ENCODE measurements at regions of chr20 and their contacts with region 1.

Region 1: GRCh38 chr20:50409495-50409894 is 100.7 kb upstream of the PTPN1 start:
- H3K4me3 Mint-ChIP-seq: no peak overlapping the region
- H3K27ac Mint-ChIP-seq: peak overlapping the region; percentile 37
- H3K4me1 Mint-ChIP-seq: peaks cover 38% of the 10 kb centered on the region
- H3K27me3 Mint-ChIP-seq: peaks cover 11% of the 10 kb centered on the region

Region 2: DNA sequence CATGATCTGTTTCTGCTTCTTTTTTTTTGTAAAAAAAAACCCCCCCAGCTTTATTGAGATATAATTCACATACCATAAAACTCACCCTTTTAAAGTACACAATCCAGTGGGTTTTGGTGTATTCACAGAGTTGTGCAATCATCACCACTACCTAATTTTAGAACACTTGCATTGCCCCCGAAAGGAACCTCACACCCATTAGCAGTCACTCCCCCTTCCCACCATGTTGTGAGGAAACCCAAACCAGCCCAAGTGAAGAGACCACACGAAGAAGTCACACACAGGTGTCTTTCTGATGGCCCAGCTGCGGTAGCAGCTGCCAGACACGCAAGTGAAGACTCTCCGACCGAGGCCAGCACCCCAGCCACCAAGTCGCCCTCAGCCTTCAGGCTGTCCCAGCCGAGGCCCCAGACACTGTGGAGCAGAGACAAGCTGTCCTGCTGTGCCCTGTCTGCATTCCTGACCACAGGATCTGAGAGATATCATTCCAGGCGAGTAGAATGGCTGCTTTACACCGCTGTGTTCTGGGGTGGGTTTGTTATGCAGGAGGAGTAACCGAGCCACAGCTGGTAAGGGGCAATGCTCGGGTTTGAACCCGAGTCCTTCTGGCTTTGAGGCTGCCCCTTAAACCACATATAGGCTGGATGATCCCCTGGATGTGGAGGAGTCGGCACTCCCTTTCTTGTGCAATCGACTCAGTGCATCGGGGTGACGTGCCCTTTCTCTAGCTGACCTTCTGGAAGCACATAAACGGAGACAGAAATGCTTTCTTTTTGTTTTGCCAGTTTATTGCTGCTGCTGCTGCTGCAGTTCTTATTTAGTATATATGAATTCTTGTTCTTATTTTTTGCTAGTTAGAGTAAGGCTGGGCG is 41.6 kb after region 1 on chr20:
- intact Hi-C with region 1: loop called (anchors 5 kb)
- H3K4me3 Mint-ChIP-seq: peak overlapping the region; percentile 18
- H3K27ac Mint-ChIP-seq: peak overlapping the region; percentile 41
- H3K4me1 Mint-ChIP-seq: peaks cover 66% of the 10 kb centered on the region
- H3K27me3 Mint-ChIP-seq: peaks cover 19% of the 10 kb centered on the region

Region 3: GRCh38 chr20:50464026-50464724 is 54.7 kb after region 1 on chr20:
- intact Hi-C with region 1: no loop called
- H3K4me3 Mint-ChIP-seq: peak overlapping the region; percentile 34
- H3K27ac Mint-ChIP-seq: no peak overlapping the region
- H3K4me1 Mint-ChIP-seq: peaks cover 33% of the 10 kb centered on the region
- H3K27me3 Mint-ChIP-seq: no peaks in the 10 kb centered on the region

Region 4: GRCh38 chr20:51220293-51220706 is 810.8 kb after region 1 on chr20:
- intact Hi-C with region 1: no loop called
- H3K4me3 Mint-ChIP-seq: no peak overlapping the region
- H3K27ac Mint-ChIP-seq: no peak overlapping the region
- H3K4me1 Mint-ChIP-seq: peaks cover 25% of the 10 kb centered on the region
- H3K27me3 Mint-ChIP-seq: peaks cover 28% of the 10 kb centered on the region

Measured in dendritic cell treated with granulocyte-macrophage colony-stimulating factor and Interleukin-4, amounts not matched to agents 40 ng/mL and 50 ng/mL, for 4 days (primary cell).